Natural killer cell (primary cell): ENCODE measurements at regions of chr13 and their contacts with region 1.

Region 1: DNA sequence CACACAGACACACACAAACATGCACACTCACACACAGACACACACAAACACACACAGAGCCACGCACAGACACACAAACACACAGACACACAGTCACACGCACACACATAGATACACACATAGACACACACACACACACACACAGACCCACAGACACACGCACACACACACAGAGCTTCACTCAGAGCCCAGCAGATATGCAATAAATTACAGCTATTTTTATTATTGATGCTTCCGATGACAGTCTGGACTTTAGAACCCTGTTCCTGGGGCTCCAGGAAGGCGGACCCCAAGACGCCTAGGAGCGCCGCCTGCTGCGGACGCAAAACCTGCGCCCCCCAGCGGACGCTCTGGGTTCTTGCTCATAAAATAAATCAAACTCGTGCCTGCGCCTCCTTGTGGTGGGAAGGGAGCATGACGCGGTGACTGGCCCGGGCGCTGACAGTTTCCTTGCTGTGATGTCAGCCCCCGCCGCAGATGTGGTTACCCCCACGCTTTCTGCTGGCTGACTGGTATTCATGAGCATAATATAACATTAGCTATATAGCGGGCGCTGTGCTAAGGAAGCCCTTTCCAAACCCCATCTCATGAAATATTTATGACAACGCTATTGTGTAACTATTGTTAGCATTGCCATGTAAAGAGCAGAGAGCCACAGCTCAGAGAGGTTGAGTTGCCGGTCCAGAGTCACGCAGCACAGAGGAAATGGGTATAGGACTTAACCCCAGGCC is 64.4 kb upstream of the TM9SF2 start:
- DNase-seq: peak; percentile 96 to 98
- ATAC-seq: peak; percentile 49 to 78 (median 51)
- H3K4me3 ChIP-seq: no peak overlapping the region
- H3K4me3 Mint-ChIP-seq: peak overlapping the region; percentile 65
- H3K27ac ChIP-seq: no peak overlapping the region
- H3K27ac Mint-ChIP-seq: peak overlapping the region; percentile 81 to 82
- H3K4me1 ChIP-seq: peaks cover 54% of the 10 kb centered on the region
- H3K4me1 Mint-ChIP-seq: peaks cover 34 to 46% of the 10 kb centered on the region in 2 donors
- H3K27me3 ChIP-seq: no peaks in the 10 kb centered on the region
- H3K27me3 Mint-ChIP-seq: peaks cover 15 to 22% of the 10 kb centered on the region in 2 donors
- CTCF ChIP-seq: peak; percentile 100

Region 2: DNA sequence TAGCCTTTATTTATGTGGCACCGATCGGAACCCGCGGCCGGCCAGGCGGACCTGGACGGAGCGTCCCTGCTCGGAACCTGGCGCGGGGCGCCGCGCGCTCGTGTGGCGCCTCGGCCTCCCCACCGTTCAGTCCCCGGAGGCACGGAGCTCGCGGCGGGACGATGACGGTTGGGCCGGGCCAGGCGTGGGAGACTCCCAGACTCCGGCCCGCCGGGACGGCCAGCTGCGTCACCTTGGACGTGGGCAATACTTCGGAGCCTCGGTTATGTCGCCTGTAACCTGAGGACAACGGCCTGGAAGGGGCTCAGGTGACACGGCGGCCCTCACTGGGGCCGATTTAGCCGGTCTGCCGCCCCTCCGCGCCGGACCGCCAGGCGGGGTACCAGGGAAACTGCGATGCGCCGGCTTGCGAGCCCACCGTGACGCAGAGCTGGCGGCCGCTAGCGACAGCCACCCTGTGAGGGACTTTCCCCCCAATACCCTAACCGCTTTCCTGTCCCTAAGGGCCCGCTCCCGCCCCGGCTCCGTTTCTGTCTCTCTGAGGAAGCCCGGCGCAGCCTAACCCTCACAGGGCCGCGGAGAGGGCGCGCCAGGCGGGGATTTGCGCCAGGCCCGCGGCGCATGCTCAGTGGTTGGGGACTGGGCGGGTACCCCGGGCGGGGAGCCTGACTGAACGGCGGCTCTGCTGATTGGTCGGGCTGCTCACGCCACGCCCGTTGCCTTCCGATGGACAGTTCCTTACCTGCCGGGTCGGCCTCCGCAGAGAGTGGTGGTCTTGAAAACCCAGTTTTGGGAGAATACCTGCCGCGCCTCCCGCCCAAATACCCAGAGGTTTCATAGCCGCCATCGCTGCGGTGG is 349.5 kb before region 1 on chr13:
- intact Hi-C with region 1: loop called (anchors 2 kb)
- DNase-seq: peak; percentile 86 to 96
- ATAC-seq: peak; percentile 68 to 84 (median 76)
- H3K4me3 ChIP-seq: peak overlapping the region; percentile 66
- H3K4me3 Mint-ChIP-seq: peak overlapping the region; percentile 98
- H3K27ac ChIP-seq: peak overlapping the region; percentile 87
- H3K27ac Mint-ChIP-seq: peak overlapping the region; percentile 95 to 100
- H3K4me1 ChIP-seq: peaks cover 28% of the 10 kb centered on the region
- H3K4me1 Mint-ChIP-seq: peaks cover 26 to 28% of the 10 kb centered on the region in 2 donors
- H3K27me3 ChIP-seq: no peaks in the 10 kb centered on the region
- H3K27me3 Mint-ChIP-seq: peaks cover 8 to 13% of the 10 kb centered on the region in 2 donors
- CTCF ChIP-seq: peak; percentile 38

Region 3: DNA sequence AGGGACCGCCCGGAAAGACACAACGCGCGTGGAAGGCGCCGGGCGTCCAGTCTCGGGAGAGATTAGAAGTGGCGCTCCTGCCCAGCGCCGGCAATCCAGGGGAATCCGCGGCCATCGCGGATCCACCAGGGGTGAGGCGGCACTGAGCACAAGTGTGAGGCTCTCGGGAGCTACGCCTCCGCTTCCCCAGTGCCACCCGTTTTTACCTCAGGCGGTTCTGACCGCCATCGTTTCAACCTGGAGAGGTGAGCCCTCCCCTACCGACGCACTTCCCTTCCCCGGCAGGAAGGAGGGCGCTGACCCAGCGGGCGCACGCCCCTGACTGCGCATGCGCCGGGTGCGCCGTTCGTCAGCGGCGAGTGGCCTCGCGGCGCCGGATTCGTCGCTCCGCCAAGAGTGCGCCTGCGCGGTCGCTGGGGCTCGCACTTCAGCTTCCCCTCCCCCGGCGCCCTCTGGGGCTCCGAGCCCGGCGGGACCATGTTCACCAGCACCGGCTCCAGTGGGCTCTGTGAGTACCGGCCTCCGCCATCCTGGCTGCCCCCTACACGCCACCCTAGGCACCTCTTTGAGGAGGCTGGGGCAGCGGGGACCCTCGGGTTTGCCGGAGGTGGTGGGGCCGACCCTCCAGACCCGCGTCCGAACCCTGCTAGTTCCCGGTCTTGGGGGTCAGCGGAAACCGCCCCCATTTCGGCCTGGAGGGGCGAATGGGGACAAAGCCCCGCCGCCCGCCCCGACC is 236.3 kb before region 1 on chr13 and contains the start of gene UBAC2:
- intact Hi-C with region 1: loop called (anchors 5 kb)
- DNase-seq: peak; percentile 95 to 100
- ATAC-seq: peak; percentile 83 to 93 (median 89)
- H3K4me3 ChIP-seq: peak within 1 kb of the TSS; percentile 97
- H3K4me3 Mint-ChIP-seq: peak within 1 kb of the TSS; percentile 93
- H3K27ac ChIP-seq: peak within 1 kb of the TSS; percentile 99
- H3K27ac Mint-ChIP-seq: peak within 1 kb of the TSS; percentile 92 to 96
- H3K4me1 ChIP-seq: peaks cover 34% of the 10 kb centered on the region
- H3K4me1 Mint-ChIP-seq: peaks cover 53 to 60% of the 10 kb centered on the region in 2 donors
- H3K27me3 ChIP-seq: no peaks in the 10 kb centered on the region
- H3K27me3 Mint-ChIP-seq: no peaks in the 10 kb centered on the region
- CTCF ChIP-seq: no peak
- total RNA-seq, gene UBAC2: 50.6 to 59.1 (median 56.4) TPM

Region 4: DNA sequence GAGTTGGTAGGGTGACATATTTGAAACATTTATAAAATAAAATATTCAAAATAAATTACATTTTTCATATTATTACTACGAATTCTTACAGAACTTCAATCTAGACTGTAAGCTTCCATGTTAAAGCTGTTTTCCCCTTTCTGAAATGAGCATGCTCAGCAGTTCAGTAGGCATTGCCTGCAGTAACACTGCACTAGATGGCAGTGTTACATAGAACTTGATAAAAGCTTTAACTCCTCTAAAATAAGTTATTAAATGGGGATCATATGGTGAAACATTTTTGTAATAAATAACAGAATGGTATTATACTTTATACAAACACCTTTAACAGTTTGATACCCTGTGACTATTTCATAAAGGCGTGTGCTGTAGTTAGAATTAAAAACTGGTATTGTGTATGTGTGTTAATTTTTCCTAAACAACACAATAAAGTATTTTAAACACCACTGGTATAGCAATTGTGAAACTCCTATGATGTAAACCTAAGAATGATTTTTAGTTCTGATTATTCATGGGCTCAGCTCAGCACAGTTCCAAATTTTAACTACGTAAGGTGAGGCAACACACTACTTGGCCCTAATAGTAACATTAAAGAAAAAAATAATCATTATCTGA is 167.1 kb before region 1 on chr13:
- intact Hi-C with region 1: loop called (anchors 1 kb)
- DNase-seq: peak in 1 of 2 donors; percentile 83
- ATAC-seq: peak; percentile 49 to 70 (median 59)
- H3K4me3 ChIP-seq: no peak overlapping the region
- H3K4me3 Mint-ChIP-seq: no peak overlapping the region
- H3K27ac ChIP-seq: peak overlapping the region; percentile 91
- H3K27ac Mint-ChIP-seq: peak overlapping the region in 1 of 2 donors; percentile 85
- H3K4me1 ChIP-seq: peaks cover 23% of the 10 kb centered on the region
- H3K4me1 Mint-ChIP-seq: peaks cover 42 to 45% of the 10 kb centered on the region in 2 donors
- H3K27me3 ChIP-seq: no peaks in the 10 kb centered on the region
- H3K27me3 Mint-ChIP-seq: no peaks in the 10 kb centered on the region
- CTCF ChIP-seq: peak; percentile 85

Region 5: GRCh38 chr13:99380921-99381645 is 55.8 kb before region 1 on chr13:
- intact Hi-C with region 1: loop called (anchors 2 kb)
- DNase-seq: peak; percentile 55 to 80
- ATAC-seq: peak; percentile 79 to 91 (median 91)
- H3K4me3 ChIP-seq: no peak overlapping the region
- H3K4me3 Mint-ChIP-seq: peak overlapping the region; percentile 75
- H3K27ac ChIP-seq: peak overlapping the region; percentile 63
- H3K27ac Mint-ChIP-seq: peak overlapping the region; percentile 87 to 88
- H3K4me1 ChIP-seq: peaks cover 87% of the 10 kb centered on the region
- H3K4me1 Mint-ChIP-seq: peaks cover 49 to 58% of the 10 kb centered on the region in 2 donors
- H3K27me3 ChIP-seq: no peaks in the 10 kb centered on the region
- H3K27me3 Mint-ChIP-seq: peaks cover 0 to 3% of the 10 kb centered on the region in 2 donors
- CTCF ChIP-seq: no peak

Region 6: DNA sequence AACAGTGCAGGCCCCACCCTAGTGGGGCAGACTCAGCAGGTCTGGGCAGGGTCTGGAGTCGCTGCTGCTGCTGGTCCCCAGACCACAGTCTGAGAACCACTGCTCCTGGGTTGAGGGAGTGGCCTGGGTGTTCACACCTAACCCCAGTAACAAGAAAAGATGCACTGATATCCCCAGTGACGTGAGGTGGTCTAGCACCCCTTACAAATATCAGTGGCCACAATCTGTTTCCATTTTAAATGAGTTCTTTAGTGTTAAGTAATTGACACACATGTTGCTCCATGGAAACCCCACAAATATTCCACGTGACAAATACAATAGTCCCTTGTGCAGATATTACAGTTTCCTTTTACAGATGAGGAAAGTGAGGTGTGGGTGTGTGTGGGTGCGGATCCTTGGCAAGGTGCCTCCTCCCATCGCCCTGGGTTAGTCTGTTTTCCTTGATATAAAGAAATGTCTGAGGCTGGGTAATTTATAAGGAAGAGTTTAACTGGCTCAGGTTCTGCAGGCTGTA is 33.3 kb before region 1 on chr13:
- intact Hi-C with region 1: loop called (anchors 1 kb)
- DNase-seq: peak; percentile 57 to 68
- ATAC-seq: peak; percentile 87 to 94 (median 92)
- H3K4me3 ChIP-seq: no peak overlapping the region
- H3K4me3 Mint-ChIP-seq: peak overlapping the region; percentile 72
- H3K27ac ChIP-seq: no peak overlapping the region
- H3K27ac Mint-ChIP-seq: peak overlapping the region; percentile 91 to 94
- H3K4me1 ChIP-seq: peaks cover 20% of the 10 kb centered on the region
- H3K4me1 Mint-ChIP-seq: peaks cover 13 to 26% of the 10 kb centered on the region in 2 donors
- H3K27me3 ChIP-seq: no peaks in the 10 kb centered on the region
- H3K27me3 Mint-ChIP-seq: peaks cover 41 to 44% of the 10 kb centered on the region in 2 donors
- CTCF ChIP-seq: no peak